Body of pancreas (tissue), 4 donors: ENCODE measurements at regions of chr7 and their contacts with region 1.

Region 1: DNA sequence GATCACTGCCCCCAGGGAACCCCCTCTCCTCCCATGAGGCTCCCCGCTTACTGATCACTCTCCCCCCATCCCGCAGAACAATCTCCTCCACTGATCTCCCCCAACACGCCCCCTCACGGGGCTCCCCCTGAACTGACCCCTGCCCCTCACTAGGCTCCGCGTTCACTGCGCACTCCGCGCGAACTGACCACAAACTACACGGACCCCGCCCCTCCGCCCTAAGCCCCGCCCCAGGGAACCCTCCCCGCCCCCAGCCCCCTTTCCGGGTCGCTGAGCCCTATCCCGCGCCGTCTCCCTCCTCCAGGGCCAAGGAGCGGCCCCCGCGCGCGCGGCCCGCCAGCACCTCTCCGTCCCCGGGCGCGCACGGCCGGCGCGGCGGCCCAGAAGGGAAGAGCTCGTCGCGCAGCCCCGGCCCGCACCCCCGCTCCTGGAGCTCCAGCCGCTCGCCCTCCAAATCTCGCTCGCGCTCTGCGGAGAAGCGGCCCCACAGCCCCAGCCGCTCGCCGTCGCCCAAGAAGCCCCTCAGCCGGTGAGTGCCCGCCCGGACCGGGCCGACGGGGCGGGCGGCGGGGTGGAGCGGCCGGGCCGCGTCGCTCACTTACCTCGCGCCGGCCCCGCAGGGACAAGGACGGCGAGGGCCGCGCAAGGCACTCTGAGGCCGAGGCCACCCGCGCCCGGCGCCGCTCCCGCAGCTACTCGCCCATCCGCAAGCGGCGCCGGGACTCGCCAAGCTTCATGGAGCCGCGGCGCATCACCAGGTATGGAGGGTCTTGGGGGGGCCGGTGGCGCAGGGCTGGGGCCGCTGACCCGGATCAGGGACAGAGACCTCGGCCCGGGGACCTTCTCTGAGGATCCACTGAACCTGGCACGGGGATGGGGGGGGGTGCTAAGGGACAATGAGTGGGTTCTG is 19.9 kb upstream of the HSPB1 start:
- DNase-seq: peak in 3 of 4 donors; percentile 20 to 51 (median 48)
- ATAC-seq: peak; percentile 51
- H3K4me3 ChIP-seq: peak overlapping the region in 1 of 2 donors; percentile 22
- H3K27ac ChIP-seq: no peak overlapping the region
- H3K4me1 ChIP-seq: peaks cover 20% of the 10 kb centered on the region
- H3K27me3 ChIP-seq: peaks cover 0 to 3% of the 10 kb centered on the region in 2 donors
- CTCF ChIP-seq: no peak
- POLR2A ChIP-seq: no peak

Region 2: GRCh38 chr7:76185187-76185896 is 97.3 kb before region 1 on chr7:
- intact Hi-C with region 1: loop called (anchors 10 kb)
- DNase-seq: no peak
- ATAC-seq: no peak
- H3K4me3 ChIP-seq: no peak overlapping the region
- H3K27ac ChIP-seq: no peak overlapping the region
- H3K4me1 ChIP-seq: no peaks in the 10 kb centered on the region
- H3K27me3 ChIP-seq: no peaks in the 10 kb centered on the region
- CTCF ChIP-seq: no peak
- POLR2A ChIP-seq: no peak

Region 3: GRCh38 chr7:76327610-76328009 is 45.0 kb after region 1 on chr7:
- intact Hi-C with region 1: loop called (anchors 5 kb)
- DNase-seq: no peak
- ATAC-seq: peak; percentile 28
- H3K4me3 ChIP-seq: no peak overlapping the region
- H3K27ac ChIP-seq: peak overlapping the region in 3 of 4 donors; percentile 36 to 58 (median 46)
- H3K4me1 ChIP-seq: peaks cover 34% of the 10 kb centered on the region
- H3K27me3 ChIP-seq: no peaks in the 10 kb centered on the region
- CTCF ChIP-seq: no peak
- POLR2A ChIP-seq: no peak

Region 4: DNA sequence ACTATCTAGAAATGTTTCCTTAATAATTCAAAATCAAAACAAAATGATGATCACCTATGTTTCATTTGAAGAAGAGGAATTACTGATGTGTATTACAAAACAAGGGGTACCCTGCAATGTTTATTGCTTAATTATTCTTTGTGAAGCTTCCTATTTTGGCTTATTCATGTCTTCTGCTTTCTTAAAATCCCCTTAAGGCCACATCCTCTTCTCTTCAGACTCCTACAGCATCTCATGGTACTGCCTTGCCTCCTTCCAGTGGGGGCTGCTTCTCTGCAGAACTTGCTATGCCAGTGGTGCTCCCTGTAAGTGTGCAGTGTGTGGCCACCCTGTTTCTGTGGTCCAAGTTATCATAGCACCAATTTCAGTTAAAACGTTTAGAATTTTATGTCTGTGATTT is 874.8 kb after region 1 on chr7:
- intact Hi-C with region 1: no loop called
- DNase-seq: peak in 1 of 4 donors; percentile 19
- ATAC-seq: no peak
- H3K4me3 ChIP-seq: no peak overlapping the region
- H3K27ac ChIP-seq: no peak overlapping the region
- H3K4me1 ChIP-seq: no peaks in the 10 kb centered on the region
- H3K27me3 ChIP-seq: no peaks in the 10 kb centered on the region
- CTCF ChIP-seq: no peak
- POLR2A ChIP-seq: no peak